Caki2 (cell line): ENCODE measurements at regions of chr21 and their contacts with region 1.

Region 1: DNA sequence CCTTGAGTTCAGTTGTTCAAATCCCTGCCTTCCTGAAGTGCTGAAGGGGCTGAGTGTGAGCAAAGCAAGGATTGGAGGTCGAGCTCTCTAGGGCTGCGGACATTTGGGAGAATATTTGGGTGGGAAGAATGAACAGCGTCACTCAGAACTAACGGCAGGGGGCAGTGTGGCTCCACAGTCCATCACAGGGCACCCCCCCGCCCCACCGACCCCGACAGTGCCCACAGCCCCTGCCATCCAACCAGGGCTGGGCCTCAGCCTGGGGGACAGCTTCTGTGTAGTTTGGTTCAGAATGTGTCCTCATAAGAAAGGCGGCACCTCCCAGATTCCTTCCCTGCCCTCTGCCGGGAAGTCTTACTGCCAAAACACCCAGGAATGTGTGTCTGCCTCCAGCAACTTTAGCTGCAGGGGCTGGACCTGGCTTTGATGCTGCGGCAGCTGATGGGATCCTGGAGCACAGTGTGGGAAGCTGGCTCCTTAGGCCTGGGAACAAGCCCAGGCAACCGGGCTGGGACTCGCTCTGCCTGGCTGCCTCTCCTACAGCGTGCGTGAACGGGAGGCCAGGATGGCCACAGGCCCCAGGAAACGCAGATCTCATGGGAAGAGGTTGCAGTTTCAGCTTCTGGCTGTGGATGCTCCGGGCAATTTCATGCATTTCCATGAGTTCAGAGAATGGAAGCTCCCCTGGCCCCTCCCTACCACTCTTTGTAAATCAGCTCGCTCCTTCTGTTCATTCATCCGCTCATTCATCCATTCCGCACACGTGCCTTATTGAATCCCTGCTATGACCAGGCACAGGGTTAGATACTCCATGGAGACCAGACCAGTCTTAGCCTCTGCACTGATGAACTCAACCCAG is 104.9 kb upstream of the TMPRSS2 start:
- DNase-seq: peak; percentile 74

Region 2: DNA sequence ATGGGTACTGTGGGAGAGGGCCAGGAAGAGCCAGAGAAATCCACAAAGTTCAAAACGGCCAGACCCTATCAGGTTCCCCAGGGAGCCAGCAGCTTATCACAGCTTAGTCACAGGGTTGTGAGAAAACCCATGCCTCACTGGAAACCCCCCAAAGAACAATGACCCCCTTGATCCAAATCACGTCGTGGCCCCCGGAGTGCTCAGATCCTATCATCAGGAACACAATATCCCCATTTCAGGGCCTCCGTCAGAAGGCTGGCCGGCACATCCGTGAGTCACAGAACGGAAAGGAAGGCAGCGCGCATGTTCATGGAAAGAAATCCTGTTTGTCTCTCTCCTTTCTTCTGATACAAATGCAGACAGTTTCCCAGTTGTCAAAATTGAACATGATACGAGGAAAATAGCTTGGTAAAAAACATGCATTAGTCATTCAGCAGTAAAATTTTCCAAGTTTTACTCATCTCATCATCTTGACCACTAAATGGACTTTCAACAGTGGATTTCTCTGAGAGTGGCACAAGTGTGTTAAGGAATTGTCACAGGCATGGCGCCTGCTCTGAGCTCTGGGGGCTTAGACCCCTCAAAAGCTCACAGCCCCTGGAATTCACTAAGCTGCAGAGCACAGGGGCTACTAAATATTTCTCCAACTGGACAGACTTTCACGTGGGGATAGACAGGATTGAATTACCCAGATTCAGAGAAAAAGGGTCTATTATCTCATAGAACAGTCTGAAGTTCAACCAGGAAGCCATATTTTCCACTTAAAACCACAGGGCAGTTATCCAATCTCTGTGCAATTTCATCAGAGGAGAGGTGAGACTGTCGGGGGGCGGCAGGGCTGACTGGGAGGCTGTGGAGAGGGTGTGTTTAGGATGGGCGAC is 29.2 kb after region 1 on chr21:
- in situ Hi-C with region 1: no loop called
- DNase-seq: peak; percentile 77

Region 3: GRCh38 chr21:41678944-41679343 is 66.0 kb after region 1 on chr21:
- in situ Hi-C with region 1: loop called (anchors 10 kb)
- DNase-seq: peak; percentile 99

Region 4: DNA sequence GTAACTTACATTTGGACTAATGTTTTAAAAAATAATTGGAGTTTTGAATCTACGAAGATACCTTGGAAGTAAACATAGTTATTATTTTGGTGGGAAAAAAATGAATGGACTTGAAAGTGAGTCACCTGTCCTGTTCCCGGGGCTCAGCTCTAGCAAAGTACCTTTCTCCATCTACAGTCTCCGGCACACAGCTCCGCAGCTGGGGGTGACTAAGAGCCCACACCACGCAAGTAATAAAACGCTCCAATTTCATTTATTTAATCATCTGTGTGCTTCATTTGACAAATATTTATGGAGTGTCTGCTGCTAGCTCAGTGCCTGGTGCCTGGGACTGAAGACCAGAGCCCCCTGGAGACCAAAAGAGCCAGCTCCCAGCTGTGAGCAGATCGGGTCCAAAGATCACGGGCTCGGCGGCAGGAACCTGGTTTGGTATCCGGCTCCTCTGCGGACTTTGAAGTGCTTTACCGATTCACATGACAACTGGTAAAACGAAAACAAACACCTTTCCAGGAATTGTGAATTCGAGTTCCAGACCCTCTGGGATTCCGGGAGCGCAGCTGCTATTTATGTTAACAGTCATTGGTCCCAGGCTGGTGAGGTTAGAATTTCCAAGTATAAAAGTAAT is 155.6 kb after region 1 on chr21:
- in situ Hi-C with region 1: loop called (anchors 25 kb)
- DNase-seq: peak; percentile 93

Region 5: DNA sequence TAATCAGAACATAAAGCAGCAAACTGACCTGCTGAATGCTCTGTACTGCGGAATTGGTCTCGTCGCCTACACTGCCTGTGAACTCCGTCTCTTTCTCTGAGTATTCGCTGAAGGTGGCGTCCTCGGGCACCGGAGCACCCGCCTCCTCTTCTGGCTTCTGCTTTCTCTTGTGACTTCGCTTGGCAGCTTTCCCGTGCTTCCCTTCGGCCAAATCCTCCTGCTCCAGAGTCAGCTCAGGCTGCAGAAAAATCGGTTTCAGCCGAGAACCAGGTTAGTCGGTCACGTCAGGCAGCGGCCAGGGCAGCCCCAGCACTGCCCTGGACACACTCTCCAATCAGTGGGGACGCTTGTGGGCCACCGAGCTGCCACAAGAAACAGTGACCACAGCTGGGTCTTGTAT is 189.8 kb after region 1 on chr21:
- in situ Hi-C with region 1: no loop called
- DNase-seq: no peak